Cardiac septum (tissue), 1 donor: ENCODE measurements at regions of chr9 and their contacts with region 1.

Region 1: DNA sequence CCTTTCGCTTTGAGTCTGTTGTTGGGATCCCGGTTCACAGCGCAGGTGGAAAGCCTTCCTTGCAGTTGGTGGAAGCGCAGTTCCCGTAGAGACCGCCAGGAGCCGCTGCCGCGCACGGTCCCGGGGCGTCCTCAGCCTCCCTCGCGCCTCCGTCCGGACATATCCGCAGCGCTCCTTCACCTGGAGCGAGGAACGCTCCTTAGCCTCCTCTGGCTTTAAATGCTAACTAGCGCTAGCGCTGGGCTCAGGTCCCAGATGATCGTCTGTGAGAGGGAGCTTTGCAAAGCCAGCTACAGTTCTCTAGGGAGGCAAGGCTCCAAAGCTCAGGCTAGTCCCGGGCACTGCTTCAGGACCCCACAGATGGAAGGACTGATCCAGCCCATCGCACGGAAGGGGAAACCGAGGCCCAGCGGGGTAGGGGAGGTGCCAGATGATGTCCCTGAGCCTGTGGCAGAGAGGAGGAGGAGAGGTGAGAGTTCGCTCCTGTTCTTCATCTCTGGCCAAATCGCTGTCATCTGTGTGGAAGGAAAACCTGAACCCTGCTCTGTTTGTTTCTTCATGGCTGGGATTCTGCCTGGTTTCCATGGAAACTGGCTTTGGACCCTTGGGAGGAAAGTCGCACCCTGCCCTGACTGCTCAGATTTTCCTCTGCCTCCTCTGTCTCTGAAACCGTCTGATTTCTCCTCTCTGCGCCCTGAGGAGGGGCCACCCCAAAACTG is 31.4 kb downstream of the COL15A1 start:
- DNase-seq: peak; percentile 95

Region 2: DNA sequence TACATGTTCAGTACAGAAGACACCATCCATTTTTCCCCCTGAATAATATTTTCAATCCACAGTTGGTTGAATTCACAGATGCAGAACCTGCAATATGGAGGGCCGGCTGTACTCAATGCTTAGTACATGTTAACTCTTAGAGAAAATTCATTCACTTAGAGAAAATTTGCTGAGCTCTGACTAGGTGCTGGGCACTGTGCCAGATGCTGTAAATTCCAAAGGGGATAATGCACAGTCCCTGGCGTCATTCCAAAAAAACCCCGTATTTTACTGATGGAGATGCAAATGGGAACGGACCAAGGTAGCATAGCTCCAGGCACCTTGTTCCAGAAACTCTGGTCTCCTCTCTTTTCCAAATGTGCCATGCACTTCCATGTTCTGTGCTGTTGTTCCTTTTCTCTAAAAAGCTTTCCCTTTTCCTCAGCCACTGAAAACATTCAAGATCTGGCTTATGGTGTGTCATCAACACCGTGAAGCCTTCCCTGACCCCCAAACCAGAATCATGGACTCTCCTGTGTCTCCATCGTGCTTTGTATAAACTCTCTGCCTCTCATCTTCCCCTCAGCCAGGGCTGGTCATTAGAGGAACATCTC is 87.1 kb before region 1 on chr9:
- intact Hi-C with region 1: loop called (anchors 2 kb)
- DNase-seq: no peak

Region 3: DNA sequence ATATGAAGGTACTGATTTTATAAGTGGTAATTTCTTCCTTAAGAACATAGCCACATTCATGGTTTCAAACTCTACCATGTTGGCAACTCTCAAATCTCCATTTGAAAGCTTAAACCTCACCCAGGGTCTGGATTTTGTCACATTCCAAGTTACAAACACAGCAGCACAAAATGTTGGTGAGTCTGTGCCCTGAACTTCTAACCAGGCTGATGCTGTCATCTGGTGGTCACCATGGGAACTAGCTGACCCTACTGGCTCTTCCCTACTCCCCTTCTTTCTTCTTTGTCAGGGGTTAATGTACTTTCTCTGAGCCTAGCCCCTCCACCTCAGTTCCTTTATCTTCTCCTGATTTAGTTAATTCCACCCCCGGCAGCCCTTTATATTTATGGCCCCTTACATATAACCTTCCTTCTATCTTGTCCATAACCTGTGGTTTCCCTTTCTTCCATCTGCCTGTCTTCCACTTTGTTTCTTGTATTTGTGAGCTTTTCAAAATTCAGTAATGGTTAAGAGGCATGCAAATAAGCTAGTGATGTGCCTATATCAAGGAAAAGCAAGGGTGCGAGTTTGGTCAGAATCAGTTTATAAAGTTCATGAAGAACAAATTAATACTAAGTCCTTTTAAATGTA is 165.6 kb after region 1 on chr9:
- intact Hi-C with region 1: loop called (anchors 2 kb)
- DNase-seq: no peak